T-cell (primary cell): ENCODE measurements at regions of chr3 and their contacts with region 1.

Region 1: GRCh38 chr3:169772897-169773828 is at the start of gene MYNN:
- DNase-seq: peak; percentile 82 to 96 (median 90)
- ATAC-seq: peak; percentile 84 to 92 (median 86)
- H3K4me3 ChIP-seq: peak within 1 kb of the TSS; percentile 81 to 99
- H3K4me3 Mint-ChIP-seq: peak within 1 kb of the TSS; percentile 98 to 99 (median 99)
- H3K27ac ChIP-seq: peak within 1 kb of the TSS; percentile 97
- H3K27ac Mint-ChIP-seq: peak within 1 kb of the TSS; percentile 98 to 99
- H3K4me1 ChIP-seq: peaks cover 12 to 22% of the 10 kb centered on the region in 2 experiments
- H3K4me1 Mint-ChIP-seq: peaks cover 43 to 62% (median 46%) of the 10 kb centered on the region in 3 donors
- H3K27me3 ChIP-seq: no peaks in the 10 kb centered on the region
- H3K27me3 Mint-ChIP-seq: no peaks in the 10 kb centered on the region
- total RNA-seq, gene MYNN: 15.1 to 20.3 (median 17.6) TPM

Region 2: GRCh38 chr3:169662132-169662842 is 110.9 kb before region 1 on chr3:
- CTCF ChIA-PET with region 1: no interaction called
- POLR2A ChIA-PET with region 1: no interaction called
- DNase-seq: peak in 7 of 35 experiments; percentile 10 to 42 (median 18)
- ATAC-seq: peak; percentile 46 to 73 (median 51)
- H3K4me3 ChIP-seq: peak overlapping the region; percentile 42 to 80
- H3K4me3 Mint-ChIP-seq: peak overlapping the region; percentile 75 to 95 (median 77)
- H3K27ac ChIP-seq: no peak overlapping the region
- H3K27ac Mint-ChIP-seq: peak overlapping the region in 1 of 2 donors; percentile 27
- H3K4me1 ChIP-seq: peaks cover 24 to 54% of the 10 kb centered on the region in 2 experiments
- H3K4me1 Mint-ChIP-seq: peaks cover 49 to 72% (median 55%) of the 10 kb centered on the region in 3 donors
- H3K27me3 ChIP-seq: peaks cover 13 to 81% of the 10 kb centered on the region in 2 experiments
- H3K27me3 Mint-ChIP-seq: peaks cover 70 to 88% of the 10 kb centered on the region in 2 donors

Region 3: DNA sequence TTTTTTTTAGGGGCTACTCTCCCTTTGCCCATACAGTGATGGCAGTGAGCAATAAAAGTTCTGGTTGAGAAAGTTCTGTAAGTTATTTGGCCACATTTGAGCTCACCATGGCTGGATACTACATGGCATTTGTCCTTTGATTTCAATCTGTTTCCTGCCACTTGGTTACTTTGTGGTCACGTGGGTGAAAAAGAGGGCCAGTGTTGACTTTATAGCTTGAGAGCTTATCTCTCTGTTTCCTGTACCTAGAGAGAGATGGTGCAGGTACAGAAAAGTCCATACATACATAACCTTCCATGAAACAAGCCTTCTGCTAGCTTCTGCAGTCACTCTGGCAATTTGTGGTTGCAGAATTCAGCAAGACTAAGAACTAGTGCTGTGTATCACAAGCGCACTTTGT is 86.3 kb before region 1 on chr3:
- CTCF ChIA-PET with region 1: no interaction called
- POLR2A ChIA-PET with region 1: no interaction called
- DNase-seq: no peak
- ATAC-seq: no peak
- H3K4me3 ChIP-seq: no peak overlapping the region
- H3K4me3 Mint-ChIP-seq: no peak overlapping the region
- H3K27ac ChIP-seq: no peak overlapping the region
- H3K27ac Mint-ChIP-seq: no peak overlapping the region
- H3K4me1 ChIP-seq: no peaks in the 10 kb centered on the region
- H3K4me1 Mint-ChIP-seq: peaks cover 0 to 6% (median 4%) of the 10 kb centered on the region in 3 donors
- H3K27me3 ChIP-seq: peaks cover 0 to 5% of the 10 kb centered on the region in 2 experiments
- H3K27me3 Mint-ChIP-seq: peaks cover 26 to 29% of the 10 kb centered on the region in 2 donors

Region 4: DNA sequence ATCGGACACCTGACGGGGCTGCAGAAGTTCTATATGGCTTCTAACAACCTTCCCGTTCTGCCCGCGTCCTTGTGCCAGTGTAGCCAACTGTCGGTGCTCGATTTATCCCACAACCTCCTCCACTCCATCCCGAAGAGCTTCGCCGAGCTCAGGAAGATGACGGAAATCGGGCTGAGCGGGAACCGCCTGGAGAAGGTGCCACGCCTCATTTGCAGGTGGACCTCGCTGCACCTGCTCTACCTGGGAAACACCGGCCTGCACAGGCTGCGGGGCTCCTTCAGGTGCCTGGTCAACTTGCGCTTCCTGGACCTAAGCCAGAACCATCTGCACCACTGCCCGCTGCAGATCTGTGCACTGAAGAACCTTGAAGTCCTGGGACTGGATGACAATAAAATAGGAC is 49.4 kb after region 1 on chr3:
- CTCF ChIA-PET with region 1: no interaction called
- POLR2A ChIA-PET with region 1: no interaction called
- DNase-seq: no peak
- ATAC-seq: no peak
- H3K4me3 ChIP-seq: no peak overlapping the region
- H3K4me3 Mint-ChIP-seq: no peak overlapping the region
- H3K27ac ChIP-seq: no peak overlapping the region
- H3K27ac Mint-ChIP-seq: no peak overlapping the region
- H3K4me1 ChIP-seq: no peaks in the 10 kb centered on the region
- H3K4me1 Mint-ChIP-seq: no peaks in the 10 kb centered on the region
- H3K27me3 ChIP-seq: peaks cover 0 to 13% of the 10 kb centered on the region in 2 experiments
- H3K27me3 Mint-ChIP-seq: peaks cover 7 to 20% of the 10 kb centered on the region in 2 donors

Region 5: GRCh38 chr3:170021083-170021482 is 247.9 kb after region 1 on chr3:
- CTCF ChIA-PET with region 1: no interaction called
- POLR2A ChIA-PET with region 1: interaction called in 1 of 2 experiments, 10 read pairs
- DNase-seq: peak in 2 of 35 experiments; percentile 6 to 22
- ATAC-seq: peak; percentile 33 to 70 (median 49)
- H3K4me3 ChIP-seq: no peak overlapping the region
- H3K4me3 Mint-ChIP-seq: peak overlapping the region in 1 of 3 donors; percentile 15
- H3K27ac ChIP-seq: no peak overlapping the region
- H3K27ac Mint-ChIP-seq: peak overlapping the region; percentile 4 to 27
- H3K4me1 ChIP-seq: peaks cover 0 to 2% of the 10 kb centered on the region in 2 experiments
- H3K4me1 Mint-ChIP-seq: peaks cover 16 to 22% (median 18%) of the 10 kb centered on the region in 3 donors
- H3K27me3 ChIP-seq: no peaks in the 10 kb centered on the region
- H3K27me3 Mint-ChIP-seq: peaks cover 0 to 8% of the 10 kb centered on the region in 2 donors

Region 6: GRCh38 chr3:170171563-170171962 is 398.4 kb after region 1 on chr3:
- CTCF ChIA-PET with region 1: interaction called in 1 of 2 experiments, 14 read pairs
- POLR2A ChIA-PET with region 1: interaction called in 1 of 2 experiments, 3 read pairs
- DNase-seq: no peak
- ATAC-seq: no peak
- H3K4me3 ChIP-seq: no peak overlapping the region
- H3K4me3 Mint-ChIP-seq: peak overlapping the region in 2 of 3 donors; percentile 2 to 42
- H3K27ac ChIP-seq: no peak overlapping the region
- H3K27ac Mint-ChIP-seq: peak overlapping the region; percentile 66 to 72
- H3K4me1 ChIP-seq: peaks cover 10 to 20% of the 10 kb centered on the region in 2 experiments
- H3K4me1 Mint-ChIP-seq: peaks cover 67 to 69% (median 68%) of the 10 kb centered on the region in 3 donors
- H3K27me3 ChIP-seq: no peaks in the 10 kb centered on the region
- H3K27me3 Mint-ChIP-seq: no peaks in the 10 kb centered on the region

Region 7: DNA sequence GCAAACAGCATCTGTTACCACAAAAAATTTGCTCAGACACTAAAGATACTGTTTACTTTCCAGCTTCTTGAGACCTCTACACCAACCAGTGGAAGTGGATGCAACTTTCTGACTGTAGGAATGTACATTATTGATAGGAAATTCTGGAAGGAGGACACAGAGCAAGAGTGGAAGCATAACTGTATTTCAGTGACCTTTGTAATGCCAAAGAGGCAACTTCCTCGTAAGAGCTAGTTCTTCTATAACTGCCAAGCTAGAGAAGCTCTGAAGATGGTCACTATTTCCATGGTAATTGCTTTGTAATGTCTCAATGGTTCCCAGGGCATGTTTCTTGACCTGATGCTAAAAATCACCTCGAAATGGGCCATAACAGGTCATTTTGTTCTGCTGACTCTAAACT is 1349.7 kb after region 1 on chr3:
- CTCF ChIA-PET with region 1: no interaction called
- POLR2A ChIA-PET with region 1: interaction called in 1 of 2 experiments, 10 read pairs
- DNase-seq: no peak
- ATAC-seq: no peak
- H3K4me3 ChIP-seq: no peak overlapping the region
- H3K4me3 Mint-ChIP-seq: no peak overlapping the region
- H3K27ac ChIP-seq: no peak overlapping the region
- H3K27ac Mint-ChIP-seq: no peak overlapping the region
- H3K4me1 ChIP-seq: no peaks in the 10 kb centered on the region
- H3K4me1 Mint-ChIP-seq: no peaks in the 10 kb centered on the region
- H3K27me3 ChIP-seq: no peaks in the 10 kb centered on the region
- H3K27me3 Mint-ChIP-seq: no peaks in the 10 kb centered on the region